ENCODE measurements at regions of chr2 and their contacts with region 1.

Region 1: DNA sequence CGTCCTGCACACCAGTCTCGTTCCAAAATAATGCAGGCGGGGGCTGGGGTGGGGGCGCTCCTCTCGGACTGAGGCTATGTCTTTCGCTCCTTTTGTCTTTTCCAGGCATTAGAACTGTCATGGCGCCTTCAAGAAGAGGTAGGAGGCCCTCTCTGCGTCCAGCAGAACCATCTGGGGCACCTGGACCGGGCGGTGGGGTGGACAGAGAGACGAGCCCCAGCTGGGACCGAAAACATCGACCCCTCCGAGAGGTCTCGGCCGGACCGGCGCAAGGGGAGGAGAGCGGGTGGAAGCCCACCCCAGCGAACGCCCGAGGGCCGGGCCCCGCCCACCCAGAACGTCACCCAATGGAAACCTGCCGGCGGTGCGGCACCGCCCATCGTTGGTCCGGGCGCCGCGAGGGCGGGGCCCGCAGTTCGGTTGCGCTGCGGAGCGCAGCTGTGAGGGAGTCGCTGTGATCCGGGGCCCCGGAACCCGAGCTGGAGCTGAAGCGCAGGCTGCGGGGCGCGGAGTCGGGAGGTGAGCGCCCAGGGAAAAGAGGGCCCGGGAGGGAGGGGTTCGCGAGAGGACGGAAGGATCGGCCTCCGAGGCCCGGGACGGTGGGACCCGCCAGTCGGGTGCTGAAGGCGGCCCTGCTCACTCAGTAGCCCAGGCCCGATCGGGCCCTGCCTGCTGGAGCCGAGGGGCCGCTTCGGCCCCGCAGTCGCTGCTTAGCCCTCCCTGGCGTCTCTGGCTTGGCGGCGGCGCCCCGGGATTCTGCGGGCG is at the start of gene NRBP1:
- DNase-seq: peak; percentile 95
- ATAC-seq: peak; percentile 90
- H3K4me3 Mint-ChIP-seq: peak within 1 kb of the TSS; percentile 96
- H3K27ac Mint-ChIP-seq: peak within 1 kb of the TSS; percentile 93
- H3K4me1 Mint-ChIP-seq: peaks cover 21% of the 10 kb centered on the region
- H3K27me3 Mint-ChIP-seq: no peaks in the 10 kb centered on the region; the same call in 1 of the 2 replicates
- CTCF ChIP-seq: no peak
- total RNA-seq, gene NRBP1: 108 to 110 TPM (median 108 TPM) in 3 replicates

Region 2: DNA sequence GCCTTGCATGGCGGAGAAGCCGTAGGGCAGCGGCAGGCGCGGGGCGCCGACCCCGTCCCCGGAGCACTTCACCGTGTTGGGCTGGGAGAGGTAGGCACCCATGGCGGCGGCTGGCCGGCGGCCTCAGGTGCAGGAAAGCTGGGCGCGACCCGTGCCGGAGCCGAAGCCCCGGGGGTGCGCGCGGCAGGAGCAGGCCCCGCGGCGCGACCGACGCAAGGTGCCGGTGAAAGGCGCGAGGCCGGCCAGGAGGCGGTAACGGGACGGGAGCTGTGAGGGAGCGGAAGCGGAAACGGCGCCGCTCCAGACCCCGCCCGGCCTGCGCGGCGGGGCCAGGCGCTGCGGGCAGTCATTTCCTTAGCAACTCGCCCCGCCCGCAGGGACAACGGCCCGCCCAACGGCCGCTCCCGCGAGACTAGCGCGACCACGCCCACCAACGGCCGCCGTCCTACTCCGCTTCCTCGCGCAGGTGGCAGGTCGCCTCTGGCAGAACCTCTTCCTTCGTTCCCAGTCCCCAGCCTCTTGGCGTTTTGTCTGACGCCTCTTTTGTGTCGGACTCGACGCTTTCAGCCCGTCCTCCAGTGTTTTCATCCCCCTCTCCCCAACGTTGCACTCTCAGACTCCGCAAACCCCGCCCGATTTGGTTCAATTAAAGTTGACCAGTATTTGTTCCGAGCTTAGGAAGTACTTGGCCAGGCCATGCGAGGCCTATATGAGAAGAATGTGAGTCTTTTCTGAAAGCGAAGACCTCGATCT is 18.9 kb before region 1 on chr2 and contains the start of gene PPM1G:
- CTCF ChIA-PET with region 1: interaction called, 52 read pairs
- POLR2A ChIA-PET with region 1: interaction called, 28 read pairs
- DNase-seq: peak; percentile 98
- ATAC-seq: peak; percentile 92
- H3K4me3 Mint-ChIP-seq: peak within 1 kb of the TSS; percentile 84
- H3K27ac Mint-ChIP-seq: peak within 1 kb of the TSS; percentile 97
- H3K4me1 Mint-ChIP-seq: peaks cover 18% of the 10 kb centered on the region
- H3K27me3 Mint-ChIP-seq: peaks cover 13% of the 10 kb centered on the region
- CTCF ChIP-seq: no peak
- total RNA-seq, gene PPM1G: 140 to 193 TPM (median 147 TPM) in 3 replicates

Region 3: DNA sequence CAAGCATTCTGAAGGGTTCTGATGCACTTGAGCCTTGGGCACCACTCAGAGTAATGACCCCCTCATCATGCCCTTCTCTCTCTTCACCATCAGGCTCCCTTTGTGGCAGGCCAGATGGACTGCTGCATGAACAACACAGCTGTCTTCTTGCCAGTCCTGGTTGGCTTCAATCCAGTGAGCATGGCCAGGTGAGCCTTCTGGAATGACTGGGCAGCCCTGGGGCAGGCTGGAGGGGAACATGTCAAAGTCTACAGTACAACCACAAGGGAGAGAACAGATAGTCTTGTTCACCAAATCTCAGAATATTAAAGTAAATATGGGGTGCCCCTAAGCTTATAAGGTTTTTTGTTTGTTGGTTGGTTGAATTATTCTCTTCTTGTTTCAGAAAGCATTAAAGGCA is 72.6 kb after region 1 on chr2:
- CTCF ChIA-PET with region 1: no interaction called
- POLR2A ChIA-PET with region 1: no interaction called
- DNase-seq: no peak
- ATAC-seq: no peak
- H3K4me3 Mint-ChIP-seq: no peak overlapping the region
- H3K27ac Mint-ChIP-seq: no peak overlapping the region
- H3K4me1 Mint-ChIP-seq: peaks cover 19% of the 10 kb centered on the region
- H3K27me3 Mint-ChIP-seq: peaks cover 26% of the 10 kb centered on the region
- CTCF ChIP-seq: no peak

Region 4: GRCh38 chr2:27663463-27664249 is 235.3 kb after region 1 on chr2 and contains the starts of genes SLC4A1AP and SUPT7L:
- CTCF ChIA-PET with region 1: no interaction called
- POLR2A ChIA-PET with region 1: no interaction called
- DNase-seq: peak; percentile 66
- ATAC-seq: peak; percentile 83
- H3K4me3 Mint-ChIP-seq: peak within 1 kb of the TSS; percentile 99
- H3K27ac Mint-ChIP-seq: peak within 1 kb of the TSS; percentile 99
- H3K4me1 Mint-ChIP-seq: peaks cover 17% of the 10 kb centered on the region
- H3K27me3 Mint-ChIP-seq: no peaks in the 10 kb centered on the region
- CTCF ChIP-seq: no peak
- total RNA-seq, gene SLC4A1AP: 17.8 to 20.1 TPM (median 19.3 TPM) in 3 replicates
- total RNA-seq, gene SUPT7L: 22.6 to 24.1 TPM (median 23.8 TPM) in 3 replicates